ENCODE measurements at regions of chr2 and their contacts with region 1.

Region 1: GRCh38 chr2:190929919-190930318 is 49.3 kb downstream of the GLS start:
- DNase-seq: no peak
- H3K4me3 Mint-ChIP-seq: no peak overlapping the region
- H3K27ac Mint-ChIP-seq: no peak overlapping the region
- H3K4me1 Mint-ChIP-seq: peaks cover 10% of the 10 kb centered on the region
- H3K27me3 Mint-ChIP-seq: no peaks in the 10 kb centered on the region

Region 2: GRCh38 chr2:190382851-190383250 is 547.1 kb before region 1 on chr2:
- intact Hi-C with region 1: no loop called
- DNase-seq: peak; percentile 83
- H3K4me3 Mint-ChIP-seq: no peak overlapping the region
- H3K27ac Mint-ChIP-seq: no peak overlapping the region
- H3K4me1 Mint-ChIP-seq: peaks cover 5% of the 10 kb centered on the region
- H3K27me3 Mint-ChIP-seq: peaks cover 6% of the 10 kb centered on the region

Region 3: DNA sequence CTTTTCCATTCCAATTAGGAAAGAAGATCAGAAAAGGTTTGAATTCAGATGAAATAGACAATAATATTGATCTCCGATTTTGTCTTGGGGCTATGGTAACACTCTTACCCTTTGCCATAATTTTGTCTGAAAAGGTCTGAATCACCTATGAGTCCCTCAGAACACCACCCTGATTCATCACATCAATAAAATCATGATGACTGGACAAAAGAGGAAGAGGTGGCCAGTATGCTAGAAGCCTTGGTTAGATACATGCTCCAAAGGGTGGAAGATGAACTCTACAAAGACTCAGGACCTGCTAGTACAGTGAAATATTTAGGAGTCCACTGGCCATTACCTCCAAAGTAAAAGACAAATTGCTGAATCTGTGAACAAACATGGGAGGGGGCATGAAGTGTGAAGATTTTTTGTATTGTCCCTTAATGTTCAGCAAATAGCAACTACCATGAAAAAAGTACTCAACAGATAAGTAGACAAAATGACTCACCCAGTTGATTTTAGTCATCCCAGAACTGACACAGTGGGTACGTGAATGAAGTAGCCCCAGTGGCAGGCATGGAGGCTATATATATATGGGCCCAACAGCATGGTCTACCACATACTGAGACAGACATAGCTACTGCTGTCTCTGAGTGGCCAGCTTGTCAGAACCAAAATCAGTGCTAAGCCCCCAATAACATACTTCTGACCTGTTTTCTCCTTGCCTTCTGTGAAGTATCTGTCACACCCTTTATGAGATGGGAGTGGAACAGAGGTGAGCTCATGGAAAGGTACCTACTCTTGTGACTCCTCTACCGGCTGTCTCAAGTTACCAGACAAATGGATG is 85.8 kb before region 1 on chr2:
- intact Hi-C with region 1: no loop called
- DNase-seq: peak; percentile 72
- H3K4me3 Mint-ChIP-seq: peak overlapping the region; percentile 60
- H3K27ac Mint-ChIP-seq: peak overlapping the region; percentile 87
- H3K4me1 Mint-ChIP-seq: peaks cover 25% of the 10 kb centered on the region
- H3K27me3 Mint-ChIP-seq: no peaks in the 10 kb centered on the region

Region 4: GRCh38 chr2:190970873-190971506 is 41.1 kb after region 1 on chr2:
- intact Hi-C with region 1: loop called (anchors 5 kb)
- DNase-seq: no peak
- H3K4me3 Mint-ChIP-seq: no peak overlapping the region
- H3K27ac Mint-ChIP-seq: peak overlapping the region; percentile 83
- H3K4me1 Mint-ChIP-seq: peaks cover 37% of the 10 kb centered on the region
- H3K27me3 Mint-ChIP-seq: no peaks in the 10 kb centered on the region

Measured in activated CD4-positive, alpha-beta T cell treated with anti-CD3 and anti-CD28 coated beads, Interleukin-2, amount 10 ng/mL, durations not matched to agents 24 days and 14 days (primary cell).